Ovary (tissue), 10 donors: ENCODE measurements at regions of chr10 and their contacts with region 1.

Region 1: DNA sequence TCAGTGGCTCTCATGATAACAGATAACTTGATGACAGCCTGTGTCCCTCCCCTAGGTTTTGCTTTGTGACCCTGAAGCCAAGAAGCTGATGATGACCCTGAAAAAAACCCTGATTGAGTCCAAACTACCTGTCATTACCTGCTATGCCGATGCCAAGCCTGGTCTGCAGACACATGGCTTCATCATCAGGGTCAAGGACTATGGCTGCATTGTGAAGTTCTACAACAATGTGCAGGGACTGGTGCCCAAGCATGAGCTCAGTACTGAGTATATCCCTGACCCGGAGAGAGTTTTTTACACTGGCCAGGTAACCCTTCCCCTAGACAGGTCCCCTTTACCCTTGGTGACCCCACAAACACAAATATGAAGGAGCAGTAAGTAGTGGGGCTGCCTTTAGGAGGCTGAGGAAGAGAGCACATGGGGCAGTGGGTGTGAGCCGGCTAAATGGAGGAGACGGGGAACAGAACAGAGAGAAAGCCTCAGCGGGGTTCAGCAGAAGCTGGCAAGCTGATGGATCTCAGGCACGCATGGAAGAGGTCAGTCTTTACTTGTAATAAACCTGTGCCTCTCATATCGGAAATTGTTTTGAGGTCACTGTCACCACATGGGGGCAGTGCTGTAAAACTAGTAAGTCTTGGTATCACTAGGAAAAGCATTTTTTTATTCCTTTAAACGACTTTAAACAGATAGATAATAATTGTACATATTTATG is 20.2 kb downstream of the PDCD11 start:
- DNase-seq: peak; percentile 61 to 83 (median 68)
- H3K4me3 ChIP-seq: no peak overlapping the region
- H3K27ac ChIP-seq: no peak overlapping the region
- H3K4me1 ChIP-seq: no peaks in the 10 kb centered on the region
- H3K27me3 ChIP-seq: no peaks in the 10 kb centered on the region
- CTCF ChIP-seq: peak; percentile 77 to 84 (median 79)
- EP300 ChIP-seq: no peak
- POLR2A ChIP-seq: no peak

Region 2: GRCh38 chr10:103429647-103430046 is 13.1 kb after region 1 on chr10:
- intact Hi-C with region 1: no loop called
- DNase-seq: no peak
- H3K4me3 ChIP-seq: no peak overlapping the region
- H3K27ac ChIP-seq: no peak overlapping the region
- H3K4me1 ChIP-seq: peaks cover 20% of the 10 kb centered on the region
- H3K27me3 ChIP-seq: no peaks in the 10 kb centered on the region
- CTCF ChIP-seq: no peak
- EP300 ChIP-seq: no peak
- POLR2A ChIP-seq: no peak

Region 3: DNA sequence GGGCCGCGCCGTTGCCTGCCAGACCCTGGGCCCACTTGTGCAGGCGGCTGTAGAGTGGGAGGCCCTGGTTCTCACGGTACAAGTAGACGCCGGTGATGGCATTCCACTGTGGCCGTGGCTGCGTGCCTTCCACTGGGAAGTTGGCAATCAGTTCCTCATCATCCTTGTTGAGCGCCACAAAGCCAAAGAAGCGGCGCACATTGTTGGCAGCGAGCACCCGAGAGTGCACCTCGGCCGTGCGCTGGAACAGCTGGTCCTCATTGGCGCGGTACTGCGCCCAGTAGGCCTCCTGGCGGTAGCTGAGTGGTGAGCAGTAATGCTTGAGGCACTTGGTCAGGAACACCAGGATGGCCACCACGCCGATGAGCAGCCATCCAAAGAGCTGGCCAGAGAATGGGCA is 30.6 kb after region 1 on chr10:
- intact Hi-C with region 1: loop called in 1 of 4 experiments (anchors 1 kb)
- DNase-seq: no peak
- H3K4me3 ChIP-seq: no peak overlapping the region
- H3K27ac ChIP-seq: peak overlapping the region; percentile 40 to 84
- H3K4me1 ChIP-seq: peaks cover 43% of the 10 kb centered on the region
- H3K27me3 ChIP-seq: no peaks in the 10 kb centered on the region
- CTCF ChIP-seq: no peak
- EP300 ChIP-seq: no peak
- POLR2A ChIP-seq: no peak

Region 4: DNA sequence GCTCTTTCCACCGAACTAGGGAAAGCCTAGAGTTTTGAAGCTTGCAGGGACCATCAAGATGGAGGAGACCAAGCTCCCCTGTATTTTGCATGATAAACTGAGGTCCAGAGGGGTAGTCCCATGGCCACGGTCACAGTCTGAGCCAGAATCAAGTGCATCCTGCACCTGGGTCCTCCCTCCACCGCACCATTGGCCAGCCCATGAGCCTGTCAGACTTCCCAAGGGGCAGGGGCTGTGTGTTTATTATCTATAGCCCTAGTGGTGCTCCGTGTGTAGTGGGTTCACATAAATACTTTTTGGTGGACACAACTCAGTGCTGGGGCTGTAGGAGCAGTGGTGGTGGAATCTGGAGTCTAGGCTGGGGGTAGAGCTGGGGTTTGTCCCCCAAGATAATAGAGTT is 58.8 kb after region 1 on chr10:
- intact Hi-C with region 1: loop called in 2 of 4 experiments (anchors 2 kb)
- DNase-seq: no peak
- H3K4me3 ChIP-seq: no peak overlapping the region
- H3K27ac ChIP-seq: no peak overlapping the region
- H3K4me1 ChIP-seq: no peaks in the 10 kb centered on the region
- H3K27me3 ChIP-seq: no peaks in the 10 kb centered on the region
- CTCF ChIP-seq: no peak
- EP300 ChIP-seq: no peak
- POLR2A ChIP-seq: no peak

Region 5: DNA sequence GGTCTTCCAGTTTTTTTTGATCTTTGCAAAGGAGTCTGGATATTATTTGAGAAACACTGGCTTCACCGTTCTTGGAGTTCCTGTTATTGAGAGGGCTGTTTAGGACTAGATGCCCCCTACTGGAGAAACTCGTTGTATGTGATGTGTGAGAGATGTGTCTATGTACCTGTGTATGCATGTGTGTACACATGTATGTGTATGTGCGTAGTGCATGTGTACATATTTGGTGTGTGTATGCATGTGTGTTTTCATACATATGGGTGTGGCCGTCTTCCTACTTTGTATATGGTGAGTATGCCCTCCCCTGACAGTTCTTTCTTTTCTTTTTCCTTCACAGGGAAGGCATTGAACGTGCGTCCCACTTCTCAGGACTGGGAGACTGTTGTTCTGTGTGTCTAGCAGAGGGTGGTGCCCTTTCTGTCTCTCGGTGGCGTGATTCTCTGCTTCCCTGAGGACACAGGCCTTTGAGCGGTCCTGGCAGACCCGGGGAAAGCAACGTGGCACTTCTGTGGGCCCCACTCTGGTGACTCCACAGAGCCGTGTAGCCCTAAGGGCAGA is 65.5 kb after region 1 on chr10:
- intact Hi-C with region 1: loop called (anchors 1 to 2 kb)
- DNase-seq: no peak
- H3K4me3 ChIP-seq: no peak overlapping the region
- H3K27ac ChIP-seq: no peak overlapping the region
- H3K4me1 ChIP-seq: peaks cover 1% of the 10 kb centered on the region
- H3K27me3 ChIP-seq: no peaks in the 10 kb centered on the region
- CTCF ChIP-seq: peak in 2 of 3 donors; percentile 64 to 71
- EP300 ChIP-seq: no peak
- POLR2A ChIP-seq: no peak

Region 6: GRCh38 chr10:103592186-103593021 is 175.8 kb after region 1 on chr10:
- intact Hi-C with region 1: loop called in 1 of 4 experiments (anchors 10 kb)
- DNase-seq: peak in 1 of 5 donors; percentile 45
- H3K4me3 ChIP-seq: no peak overlapping the region
- H3K27ac ChIP-seq: no peak overlapping the region
- H3K4me1 ChIP-seq: peaks cover 5% of the 10 kb centered on the region
- H3K27me3 ChIP-seq: no peaks in the 10 kb centered on the region
- CTCF ChIP-seq: peak in 1 of 3 donors; percentile 15
- EP300 ChIP-seq: no peak
- POLR2A ChIP-seq: no peak

Region 7: GRCh38 chr10:103685880-103686669 is 269.5 kb after region 1 on chr10:
- intact Hi-C with region 1: loop called in 1 of 4 experiments (anchors 10 kb)
- DNase-seq: peak; percentile 79 to 91 (median 89)
- H3K4me3 ChIP-seq: no peak overlapping the region
- H3K27ac ChIP-seq: peak overlapping the region in 1 of 2 donors; percentile 28
- H3K4me1 ChIP-seq: no peaks in the 10 kb centered on the region
- H3K27me3 ChIP-seq: no peaks in the 10 kb centered on the region
- CTCF ChIP-seq: peak; percentile 93 to 96 (median 94)
- EP300 ChIP-seq: peak; percentile 43
- POLR2A ChIP-seq: no peak